ENCODE measurements at regions of chr12 and their contacts with region 1.

Region 1: GRCh38 chr12:121334513-121335343 is 17.5 kb downstream of the ANAPC5 start:
- DNase-seq: no peak
- H3K4me3 ChIP-seq: no peak overlapping the region
- H3K27ac ChIP-seq: no peak overlapping the region
- H3K4me1 ChIP-seq: no peaks in the 10 kb centered on the region
- H3K27me3 ChIP-seq: no peaks in the 10 kb centered on the region
- CTCF ChIP-seq: peak; percentile 92

Region 2: DNA sequence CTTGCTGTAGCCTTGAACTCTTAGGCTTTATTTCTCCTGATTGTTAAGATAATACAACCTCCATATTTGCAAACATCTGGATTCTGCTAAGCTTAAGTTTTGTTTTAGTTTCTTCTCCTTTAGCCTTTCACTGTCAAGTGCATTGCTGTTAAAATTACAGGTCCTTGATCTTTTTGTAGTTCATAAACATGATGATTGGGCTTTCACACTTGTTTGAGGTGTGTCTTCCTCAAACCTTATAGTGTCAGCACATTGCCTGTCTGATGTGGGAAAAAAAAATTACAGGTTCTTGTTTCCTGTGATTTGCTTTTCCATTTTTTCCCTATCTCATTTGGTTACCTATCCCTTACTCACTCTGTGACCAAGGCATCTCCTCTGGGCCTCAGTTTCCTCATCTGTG is 1286.5 kb before region 1 on chr12:
- intact Hi-C with region 1: no loop called
- DNase-seq: no peak
- H3K4me3 ChIP-seq: no peak overlapping the region
- H3K27ac ChIP-seq: no peak overlapping the region
- H3K4me1 ChIP-seq: no peaks in the 10 kb centered on the region
- H3K27me3 ChIP-seq: peaks cover 11% of the 10 kb centered on the region
- CTCF ChIP-seq: no peak

Region 3: GRCh38 chr12:121443193-121443870 is 108.6 kb after region 1 on chr12:
- intact Hi-C with region 1: loop called (anchors 10 kb)
- DNase-seq: peak; percentile 81
- H3K4me3 ChIP-seq: no peak overlapping the region
- H3K27ac ChIP-seq: no peak overlapping the region
- H3K4me1 ChIP-seq: peaks cover 9% of the 10 kb centered on the region
- H3K27me3 ChIP-seq: no peaks in the 10 kb centered on the region
- CTCF ChIP-seq: peak; percentile 90